Colonic mucosa (tissue), 4 donors: ENCODE measurements at regions of chr19 and their contacts with region 1.

Region 1: GRCh38 chr19:55383789-55384577 is at the start of gene TMEM238:
- DNase-seq: peak; percentile 83
- H3K4me3 ChIP-seq: peak within 1 kb of the TSS; percentile 73
- H3K27ac ChIP-seq: peak within 1 kb of the TSS; percentile 94
- H3K4me1 ChIP-seq: peaks cover 23% of the 10 kb centered on the region
- H3K27me3 ChIP-seq: no peaks in the 10 kb centered on the region
- CTCF ChIP-seq: no peak
- total RNA-seq, gene TMEM238: 78.1 to 85.9 TPM

Region 2: GRCh38 chr19:55146078-55146704 is 237.8 kb before region 1 on chr19:
- intact Hi-C with region 1: no loop called
- DNase-seq: peak; percentile 33
- H3K4me3 ChIP-seq: no peak overlapping the region
- H3K27ac ChIP-seq: no peak overlapping the region
- H3K4me1 ChIP-seq: no peaks in the 10 kb centered on the region
- H3K27me3 ChIP-seq: peaks cover 18% of the 10 kb centered on the region
- CTCF ChIP-seq: peak; percentile 23

Region 3: DNA sequence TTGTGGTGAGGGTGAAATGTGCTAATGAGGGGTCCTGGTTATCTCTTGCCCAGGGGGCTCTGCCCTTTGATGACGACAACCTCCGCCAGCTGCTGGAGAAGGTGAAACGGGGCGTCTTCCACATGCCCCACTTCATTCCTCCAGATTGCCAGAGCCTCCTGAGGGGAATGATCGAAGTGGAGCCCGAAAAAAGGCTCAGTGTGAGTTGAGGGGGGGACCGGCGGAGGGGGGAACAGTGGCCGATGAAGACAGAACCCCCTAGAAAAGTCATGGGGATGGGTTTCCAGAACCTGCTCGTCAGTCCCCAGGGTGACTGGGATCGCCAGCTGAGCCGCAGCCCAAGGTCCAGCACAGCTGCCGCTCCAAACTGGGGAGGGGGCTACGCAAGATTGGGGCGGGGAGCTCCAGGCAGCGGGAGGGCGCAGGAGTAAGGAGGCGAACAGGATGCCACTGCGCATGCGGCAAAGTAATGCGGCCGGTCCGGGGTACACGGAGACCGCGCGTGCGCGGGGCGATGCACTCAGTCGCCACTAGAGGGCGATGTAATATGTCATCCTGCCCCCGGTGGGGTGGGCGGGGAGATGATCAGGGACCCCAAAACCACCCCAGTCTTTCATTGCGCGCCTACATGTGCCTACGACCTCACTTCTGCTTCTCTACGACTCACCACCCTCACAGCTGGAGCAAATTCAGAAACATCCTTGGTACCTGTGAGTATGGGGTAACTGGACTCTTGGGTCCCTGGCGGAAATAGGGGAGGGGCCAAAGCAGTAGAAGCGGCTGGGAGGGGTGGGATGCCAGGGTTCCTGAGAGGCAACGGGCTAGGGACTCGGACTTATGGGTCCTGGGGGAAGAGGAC is 82.3 kb before region 1 on chr19:
- intact Hi-C with region 1: loop called (anchors 2 kb)
- DNase-seq: peak; percentile 93
- H3K4me3 ChIP-seq: no peak overlapping the region
- H3K27ac ChIP-seq: no peak overlapping the region
- H3K4me1 ChIP-seq: no peaks in the 10 kb centered on the region
- H3K27me3 ChIP-seq: no peaks in the 10 kb centered on the region
- CTCF ChIP-seq: peak; percentile 97

Region 4: GRCh38 chr19:55624109-55625003 is 240.4 kb after region 1 on chr19 and contains the start of gene ZNF784:
- intact Hi-C with region 1: no loop called
- DNase-seq: peak; percentile 92
- H3K4me3 ChIP-seq: peak within 1 kb of the TSS; percentile 39
- H3K27ac ChIP-seq: peak within 1 kb of the TSS; percentile 83
- H3K4me1 ChIP-seq: peaks cover 4% of the 10 kb centered on the region
- H3K27me3 ChIP-seq: no peaks in the 10 kb centered on the region
- CTCF ChIP-seq: no peak
- total RNA-seq, gene ZNF784: 9.9 to 10.2 TPM